Calu3 (cell line): ENCODE measurements at regions of chr4 and their contacts with region 1.

Region 1: DNA sequence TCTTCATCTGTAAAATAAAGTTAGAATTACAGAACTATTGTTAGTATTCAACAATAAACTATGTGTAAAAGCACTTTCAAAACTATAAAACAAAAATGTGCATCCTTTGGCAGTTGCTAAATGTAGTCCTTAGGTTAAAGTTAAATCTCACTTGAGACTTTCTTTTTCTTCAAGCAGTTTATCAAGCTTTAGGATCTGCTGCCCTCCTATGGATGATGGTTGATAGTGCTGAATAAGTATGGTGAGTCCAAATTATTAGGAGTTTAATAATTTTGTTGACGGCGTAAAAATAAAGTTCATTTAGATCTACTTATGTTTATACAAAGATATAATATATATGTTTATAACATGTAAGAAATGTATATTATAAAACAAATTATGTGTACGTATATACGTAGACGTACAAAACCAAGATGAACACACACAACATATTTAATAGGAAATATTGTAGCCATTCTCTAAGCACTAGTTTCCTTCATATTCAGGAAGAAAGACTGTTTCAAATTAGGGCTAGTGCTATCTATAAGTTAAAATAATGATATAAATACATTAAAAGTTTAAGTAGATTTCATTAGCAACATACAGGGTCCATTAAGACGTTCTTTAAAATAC is 22.3 kb downstream of the UGT2A2 start:
- DNase-seq: peak; percentile 24
- H3K4me3 Mint-ChIP-seq: no peak overlapping the region
- H3K27ac Mint-ChIP-seq: no peak overlapping the region
- H3K4me1 Mint-ChIP-seq: no peaks in the 10 kb centered on the region
- H3K27me3 Mint-ChIP-seq: no peaks in the 10 kb centered on the region
- CTCF ChIP-seq: no peak

Region 2: DNA sequence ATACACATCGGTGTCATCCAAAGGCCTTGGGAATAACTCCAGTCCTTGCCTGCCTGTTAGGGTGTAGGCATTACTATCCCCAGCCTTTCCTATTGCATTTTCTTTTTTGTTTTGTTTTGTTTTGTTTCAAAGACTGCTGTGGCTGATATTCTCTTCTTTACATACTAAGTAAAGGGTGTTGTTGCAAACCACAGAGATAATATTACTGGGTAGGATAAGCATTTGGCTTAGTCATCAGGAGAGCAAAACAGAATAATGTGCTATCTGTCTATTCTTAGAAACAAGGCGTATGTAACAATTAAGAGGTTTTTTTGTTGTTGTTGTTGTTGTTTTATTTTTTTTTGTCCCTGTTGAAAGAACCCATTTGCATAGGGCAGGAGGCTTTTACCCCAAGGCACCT is 295.1 kb before region 1 on chr4:
- CTCF ChIA-PET with region 1: no interaction called
- intact Hi-C with region 1: loop called (anchors 1 kb)
- DNase-seq: no peak
- H3K4me3 Mint-ChIP-seq: no peak overlapping the region
- H3K27ac Mint-ChIP-seq: no peak overlapping the region
- H3K4me1 Mint-ChIP-seq: peaks cover 25% of the 10 kb centered on the region
- H3K27me3 Mint-ChIP-seq: no peaks in the 10 kb centered on the region
- CTCF ChIP-seq: no peak

Region 3: DNA sequence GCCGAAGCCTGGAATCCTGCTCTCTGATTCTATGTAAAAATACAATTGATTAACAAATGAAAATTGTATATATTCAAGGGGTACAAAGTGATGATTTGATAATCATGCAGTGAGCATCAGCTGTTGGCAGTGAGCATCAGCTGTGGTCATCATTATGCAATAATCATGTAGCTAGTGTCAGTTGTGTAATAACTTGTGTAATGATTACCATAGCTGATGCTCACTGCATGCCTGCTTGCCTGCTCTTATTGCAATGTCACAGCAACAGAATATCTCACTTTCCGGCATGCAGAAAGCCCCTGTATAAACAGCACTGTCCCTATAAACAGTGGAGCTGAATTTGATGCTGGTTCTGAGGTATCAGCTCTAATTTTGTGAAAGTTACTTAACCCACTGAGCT is 96.4 kb after region 1 on chr4:
- CTCF ChIA-PET with region 1: no interaction called
- intact Hi-C with region 1: no loop called
- DNase-seq: no peak
- H3K4me3 Mint-ChIP-seq: no peak overlapping the region
- H3K27ac Mint-ChIP-seq: no peak overlapping the region
- H3K4me1 Mint-ChIP-seq: peaks cover 8% of the 10 kb centered on the region
- H3K27me3 Mint-ChIP-seq: no peaks in the 10 kb centered on the region
- CTCF ChIP-seq: no peak